Activated CD4-positive, alpha-beta T cell treated with anti-CD3 and anti-CD28 coated beads, Interleukin-2, amount 10 ng/mL, durations not matched to agents 24 days and 14 days (primary cell): ENCODE measurements at regions of chr1 and their contacts with region 1.

Region 1: GRCh38 chr1:167263819-167264464 is 43.3 kb downstream of the POU2F1 start:
- DNase-seq: peak; percentile 63
- H3K4me3 Mint-ChIP-seq: no peak overlapping the region
- H3K27ac Mint-ChIP-seq: no peak overlapping the region
- H3K4me1 Mint-ChIP-seq: peaks cover 16% of the 10 kb centered on the region
- H3K27me3 Mint-ChIP-seq: no peaks in the 10 kb centered on the region

Region 2: DNA sequence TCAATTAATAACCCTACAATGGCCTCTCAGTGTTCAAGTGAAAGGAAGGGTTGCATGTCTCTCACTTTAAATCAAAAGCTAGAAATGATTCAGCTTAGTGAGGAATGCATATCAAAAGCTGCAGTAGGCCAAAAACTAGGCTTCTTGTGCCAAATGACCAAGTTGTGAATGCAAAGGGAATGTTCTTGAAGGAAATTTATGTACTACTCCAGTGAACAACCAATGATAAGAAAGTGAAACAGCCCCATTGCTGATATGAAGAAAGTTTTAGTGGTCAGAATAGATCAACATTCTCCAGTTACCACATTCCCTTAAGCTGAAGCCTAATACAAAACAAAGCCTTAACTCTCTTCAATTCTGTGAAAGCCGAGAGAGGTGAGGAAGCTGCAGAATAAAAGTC is 264.9 kb before region 1 on chr1:
- intact Hi-C with region 1: no loop called
- DNase-seq: no peak
- H3K4me3 Mint-ChIP-seq: no peak overlapping the region
- H3K27ac Mint-ChIP-seq: peak overlapping the region; percentile 15
- H3K4me1 Mint-ChIP-seq: peaks cover 10% of the 10 kb centered on the region
- H3K27me3 Mint-ChIP-seq: peaks cover 16% of the 10 kb centered on the region

Region 3: DNA sequence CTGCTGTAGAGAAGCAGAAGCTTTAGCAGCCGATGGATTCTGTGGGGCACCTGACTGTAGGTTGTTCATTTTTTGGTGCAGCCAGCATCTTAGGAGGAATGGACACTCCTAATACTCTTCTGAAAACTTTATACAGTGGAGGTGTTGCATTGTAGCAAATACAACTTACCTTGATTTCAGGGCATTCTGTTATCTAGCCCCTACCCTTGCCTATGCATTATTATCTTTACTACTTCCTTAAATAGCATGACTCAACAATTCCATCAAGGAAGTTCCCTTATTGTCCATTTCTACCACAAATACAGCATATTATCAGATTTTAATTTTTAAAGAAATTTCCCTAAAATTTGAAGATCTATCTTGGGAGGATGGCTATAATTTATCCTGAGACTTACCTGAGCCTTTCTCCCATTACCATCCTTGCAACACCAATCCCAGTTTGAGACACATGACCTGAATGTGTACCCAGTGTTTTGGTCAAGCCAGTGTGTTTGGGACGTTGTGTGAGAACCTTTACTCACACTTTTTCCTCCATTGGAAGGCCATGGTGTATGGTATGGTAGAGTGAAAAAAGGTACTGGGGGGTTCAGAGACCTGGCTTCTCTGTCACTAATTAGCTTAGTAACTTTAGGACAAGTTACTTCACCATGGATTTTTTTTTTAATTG is 34.1 kb before region 1 on chr1:
- intact Hi-C with region 1: no loop called
- DNase-seq: peak; percentile 36
- H3K4me3 Mint-ChIP-seq: no peak overlapping the region
- H3K27ac Mint-ChIP-seq: no peak overlapping the region
- H3K4me1 Mint-ChIP-seq: peaks cover 17% of the 10 kb centered on the region
- H3K27me3 Mint-ChIP-seq: no peaks in the 10 kb centered on the region

Region 4: GRCh38 chr1:167342846-167343245 is 78.9 kb after region 1 on chr1:
- intact Hi-C with region 1: loop called (anchors 5 kb)
- DNase-seq: no peak
- H3K4me3 Mint-ChIP-seq: no peak overlapping the region
- H3K27ac Mint-ChIP-seq: no peak overlapping the region
- H3K4me1 Mint-ChIP-seq: peaks cover 9% of the 10 kb centered on the region
- H3K27me3 Mint-ChIP-seq: no peaks in the 10 kb centered on the region

Region 5: DNA sequence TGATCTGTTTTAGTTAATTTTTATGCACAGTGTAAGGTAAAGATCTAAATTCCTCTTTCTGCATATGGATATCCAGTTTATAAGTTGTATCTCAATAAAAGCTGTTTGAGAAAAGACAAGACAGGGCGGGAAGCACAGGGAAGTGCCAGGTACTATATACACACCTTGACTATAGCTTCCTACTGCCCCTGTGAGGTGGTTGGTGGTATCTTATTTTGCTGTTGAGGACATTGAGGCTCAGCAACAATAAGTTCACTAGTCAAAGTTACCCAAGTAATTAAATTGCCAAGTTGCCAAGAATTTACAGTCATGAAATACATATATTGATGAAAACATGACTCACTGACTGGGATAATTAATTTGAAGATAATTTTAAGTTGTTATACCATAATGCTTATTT is 145.2 kb after region 1 on chr1:
- intact Hi-C with region 1: loop called (anchors 5 kb)
- DNase-seq: no peak
- H3K4me3 Mint-ChIP-seq: no peak overlapping the region
- H3K27ac Mint-ChIP-seq: no peak overlapping the region
- H3K4me1 Mint-ChIP-seq: peaks cover 15% of the 10 kb centered on the region
- H3K27me3 Mint-ChIP-seq: no peaks in the 10 kb centered on the region

Region 6: GRCh38 chr1:167442124-167442848 is 178.3 kb after region 1 on chr1:
- intact Hi-C with region 1: loop called (anchors 2 kb)
- DNase-seq: peak; percentile 95
- H3K4me3 Mint-ChIP-seq: peak overlapping the region; percentile 21
- H3K27ac Mint-ChIP-seq: peak overlapping the region; percentile 50
- H3K4me1 Mint-ChIP-seq: peaks cover 73% of the 10 kb centered on the region
- H3K27me3 Mint-ChIP-seq: no peaks in the 10 kb centered on the region

Region 7: DNA sequence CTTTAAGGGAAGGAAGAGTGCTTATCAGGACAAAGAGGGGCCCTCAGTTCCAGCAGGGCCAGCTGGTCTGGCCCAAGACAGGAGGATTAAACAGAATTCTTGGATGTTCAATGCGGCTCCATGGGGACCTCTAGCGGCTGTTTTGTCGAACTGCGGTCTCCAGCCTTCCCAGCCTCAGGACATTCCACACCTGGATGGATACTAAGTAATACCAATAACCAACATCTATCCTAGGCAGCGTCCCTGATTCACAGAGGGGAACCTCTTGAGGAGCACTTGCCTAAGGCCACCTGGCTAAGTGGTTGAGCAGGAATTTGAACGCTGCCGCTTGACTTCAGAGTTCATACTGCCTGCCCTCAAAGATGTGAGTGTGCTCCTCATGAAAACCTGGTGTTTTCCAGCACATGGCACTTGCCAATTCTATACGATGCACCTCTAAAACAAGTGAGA is 269.9 kb after region 1 on chr1:
- intact Hi-C with region 1: loop called (anchors 2 kb)
- DNase-seq: peak; percentile 89
- H3K4me3 Mint-ChIP-seq: no peak overlapping the region
- H3K27ac Mint-ChIP-seq: no peak overlapping the region
- H3K4me1 Mint-ChIP-seq: peaks cover 7% of the 10 kb centered on the region
- H3K27me3 Mint-ChIP-seq: peaks cover 1% of the 10 kb centered on the region